Natural killer cell (primary cell): ENCODE measurements at regions of chr14 and their contacts with region 1.

Region 1: GRCh38 chr14:21557084-21557901 is 22.6 kb downstream of the OR10G3 start:
- DNase-seq: peak; percentile 48 to 92
- ATAC-seq: peak; percentile 72 to 80 (median 78)
- H3K4me3 ChIP-seq: no peak overlapping the region
- H3K4me3 Mint-ChIP-seq: peak overlapping the region; percentile 45
- H3K27ac ChIP-seq: no peak overlapping the region
- H3K27ac Mint-ChIP-seq: peak overlapping the region in 1 of 2 donors; percentile 58
- H3K4me1 ChIP-seq: peaks cover 5% of the 10 kb centered on the region
- H3K4me1 Mint-ChIP-seq: peaks cover 6% of the 10 kb centered on the region in 2 donors
- H3K27me3 ChIP-seq: no peaks in the 10 kb centered on the region
- H3K27me3 Mint-ChIP-seq: no peaks in the 10 kb centered on the region
- CTCF ChIP-seq: peak; percentile 75

Region 2: GRCh38 chr14:21498553-21499526 is 58.5 kb before region 1 on chr14:
- intact Hi-C with region 1: loop called (anchors 1 kb)
- DNase-seq: peak in 1 of 2 donors; percentile 82
- ATAC-seq: peak in 2 of 3 donors; percentile 63 to 75
- H3K4me3 ChIP-seq: no peak overlapping the region
- H3K4me3 Mint-ChIP-seq: no peak overlapping the region
- H3K27ac ChIP-seq: no peak overlapping the region
- H3K27ac Mint-ChIP-seq: peak overlapping the region; percentile 4 to 57
- H3K4me1 ChIP-seq: no peaks in the 10 kb centered on the region
- H3K4me1 Mint-ChIP-seq: peaks cover 5 to 6% of the 10 kb centered on the region in 2 donors
- H3K27me3 ChIP-seq: no peaks in the 10 kb centered on the region
- H3K27me3 Mint-ChIP-seq: no peaks in the 10 kb centered on the region
- CTCF ChIP-seq: peak; percentile 61

Region 3: GRCh38 chr14:21572604-21573003 is 15.3 kb after region 1 on chr14:
- intact Hi-C with region 1: loop called (anchors 1 kb)
- DNase-seq: no peak
- ATAC-seq: no peak
- H3K4me3 ChIP-seq: no peak overlapping the region
- H3K4me3 Mint-ChIP-seq: no peak overlapping the region
- H3K27ac ChIP-seq: no peak overlapping the region
- H3K27ac Mint-ChIP-seq: no peak overlapping the region
- H3K4me1 ChIP-seq: no peaks in the 10 kb centered on the region
- H3K4me1 Mint-ChIP-seq: no peaks in the 10 kb centered on the region
- H3K27me3 ChIP-seq: no peaks in the 10 kb centered on the region
- H3K27me3 Mint-ChIP-seq: peaks cover 23 to 26% of the 10 kb centered on the region in 2 donors
- CTCF ChIP-seq: no peak

Region 4: DNA sequence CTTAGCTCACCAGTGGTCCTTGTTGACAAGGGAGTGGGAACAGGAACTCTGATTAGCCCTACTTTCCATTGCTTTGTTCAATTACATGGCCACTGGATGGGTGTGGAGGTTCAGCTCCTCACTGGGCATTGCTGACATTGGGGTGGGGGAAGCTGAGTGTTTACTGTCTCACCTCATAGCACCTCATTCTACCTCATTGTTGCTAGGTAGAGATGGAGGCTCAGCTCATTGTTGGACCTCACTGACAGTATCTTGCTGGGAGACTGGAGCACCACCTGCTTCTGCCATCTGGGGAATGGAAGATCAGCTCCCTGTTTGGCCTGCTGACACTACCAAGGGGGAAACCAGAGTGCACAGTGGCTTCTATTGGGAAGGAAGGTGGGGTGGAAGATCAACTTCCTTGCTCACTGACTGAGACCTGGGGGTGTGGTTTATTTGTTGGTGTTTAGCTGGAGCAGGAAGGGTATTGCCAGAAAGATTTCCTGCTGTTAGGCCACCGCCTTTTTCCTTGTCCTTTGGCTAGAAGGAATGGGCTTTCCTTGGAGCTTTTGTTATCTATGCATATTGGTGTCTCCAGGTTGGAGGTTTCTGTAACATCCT is 95.0 kb after region 1 on chr14:
- intact Hi-C with region 1: no loop called
- DNase-seq: no peak
- ATAC-seq: no peak
- H3K4me3 ChIP-seq: no peak overlapping the region
- H3K4me3 Mint-ChIP-seq: no peak overlapping the region
- H3K27ac ChIP-seq: no peak overlapping the region
- H3K27ac Mint-ChIP-seq: no peak overlapping the region
- H3K4me1 ChIP-seq: no peaks in the 10 kb centered on the region
- H3K4me1 Mint-ChIP-seq: no peaks in the 10 kb centered on the region
- H3K27me3 ChIP-seq: no peaks in the 10 kb centered on the region
- H3K27me3 Mint-ChIP-seq: peaks cover 7 to 19% of the 10 kb centered on the region in 2 donors
- CTCF ChIP-seq: no peak